Activated CD4-positive, alpha-beta T cell treated with anti-CD3 and anti-CD28 coated beads for 36 hours (primary cell): ENCODE measurements at regions of chr3 and their contacts with region 1.

Region 1: GRCh38 chr3:111668912-111669488 is 73.9 kb upstream of the ZBED2 start:
- DNase-seq: no peak
- ATAC-seq: peak; percentile 39
- H3K4me3 Mint-ChIP-seq: peak overlapping the region; percentile 26
- H3K27ac Mint-ChIP-seq: peak overlapping the region; percentile 75
- H3K4me1 Mint-ChIP-seq: peaks cover 79% of the 10 kb centered on the region
- H3K27me3 Mint-ChIP-seq: no peaks in the 10 kb centered on the region

Region 2: DNA sequence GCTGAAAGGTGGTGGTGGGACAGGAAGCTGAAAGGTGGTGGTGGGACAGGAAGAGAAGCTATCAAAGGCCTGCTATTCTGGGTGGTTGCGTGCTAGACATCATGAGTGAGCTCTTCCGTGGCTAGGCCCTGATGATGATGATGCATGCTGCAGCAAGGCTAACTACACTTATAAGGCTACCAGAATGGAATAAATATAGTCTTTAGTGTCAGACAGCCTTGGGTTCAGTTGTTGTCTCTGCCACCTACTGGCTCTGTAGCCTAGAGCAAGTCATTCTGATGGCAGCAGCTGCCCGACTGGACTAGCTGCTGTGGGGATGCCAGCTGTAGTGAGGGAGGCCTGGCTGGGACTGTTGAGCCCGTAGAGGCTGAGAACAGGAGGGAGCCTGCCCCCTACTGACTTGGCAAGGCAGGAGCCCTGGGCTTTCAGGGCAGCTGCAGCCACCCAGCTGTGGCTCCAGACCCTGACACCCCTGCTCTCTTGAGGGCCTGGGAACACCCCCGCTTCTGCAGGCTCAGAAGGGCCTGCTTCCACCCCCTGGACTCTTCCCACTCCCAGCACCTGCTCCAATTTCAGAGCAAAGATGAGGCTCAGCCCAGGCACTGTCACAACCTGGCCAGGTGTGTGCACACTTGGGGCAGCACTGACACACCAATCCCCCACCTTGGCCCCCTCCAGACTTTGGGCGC is 52.4 kb before region 1 on chr3:
- CTCF ChIA-PET with region 1: interaction called, 6 read pairs
- POLR2A ChIA-PET with region 1: interaction called, 3 read pairs
- intact Hi-C with region 1: loop called (anchors 1 to 2 kb)
- DNase-seq: peak; percentile 84
- ATAC-seq: peak; percentile 84
- H3K4me3 Mint-ChIP-seq: no peak overlapping the region
- H3K27ac Mint-ChIP-seq: peak overlapping the region; percentile 92
- H3K4me1 Mint-ChIP-seq: peaks cover 77% of the 10 kb centered on the region
- H3K27me3 Mint-ChIP-seq: no peaks in the 10 kb centered on the region

Region 3: DNA sequence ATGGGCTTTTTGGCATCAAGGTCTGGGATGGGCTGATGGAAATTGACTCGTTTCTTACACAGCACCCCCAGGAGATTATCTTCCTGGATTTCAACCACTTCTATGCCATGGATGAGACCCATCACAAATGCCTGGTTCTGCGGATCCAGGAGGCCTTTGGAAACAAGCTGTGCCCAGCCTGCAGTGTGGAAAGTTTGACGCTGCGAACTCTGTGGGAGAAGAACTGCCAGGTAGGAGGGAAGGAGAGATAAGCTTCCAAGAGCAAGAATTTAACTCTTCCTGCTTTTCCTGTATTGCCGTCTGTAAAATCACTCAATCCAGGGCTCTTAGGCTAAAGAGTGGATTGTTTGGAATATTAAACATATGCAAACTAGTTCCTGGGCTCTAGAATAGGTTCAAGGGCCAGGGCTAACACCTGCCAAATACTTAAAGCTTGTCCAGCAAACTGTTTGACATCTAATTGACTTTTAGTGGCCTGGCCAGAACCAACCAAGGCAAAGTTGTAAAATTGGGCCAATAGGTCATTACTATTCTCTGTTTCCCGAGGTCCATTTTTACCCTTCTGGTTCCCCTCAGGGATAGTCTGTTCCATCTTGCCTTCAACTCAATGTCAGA is 39.3 kb after region 1 on chr3:
- CTCF ChIA-PET with region 1: interaction called, 13 read pairs
- POLR2A ChIA-PET with region 1: no interaction called
- intact Hi-C with region 1: no loop called
- DNase-seq: no peak
- ATAC-seq: no peak
- H3K4me3 Mint-ChIP-seq: no peak overlapping the region
- H3K27ac Mint-ChIP-seq: no peak overlapping the region
- H3K4me1 Mint-ChIP-seq: peaks cover 33% of the 10 kb centered on the region
- H3K27me3 Mint-ChIP-seq: no peaks in the 10 kb centered on the region

Region 4: GRCh38 chr3:111859974-111860859 is 191.2 kb after region 1 on chr3:
- CTCF ChIA-PET with region 1: interaction called, 8 read pairs
- POLR2A ChIA-PET with region 1: no interaction called
- intact Hi-C with region 1: loop called in 1 of 2 experiments (anchors 2 kb)
- DNase-seq: peak; percentile 66
- ATAC-seq: peak; percentile 66
- H3K4me3 Mint-ChIP-seq: peak overlapping the region; percentile 82
- H3K27ac Mint-ChIP-seq: peak overlapping the region; percentile 29
- H3K4me1 Mint-ChIP-seq: peaks cover 11% of the 10 kb centered on the region
- H3K27me3 Mint-ChIP-seq: peaks cover 36% of the 10 kb centered on the region

Region 5: GRCh38 chr3:112013058-112013783 is 344.2 kb after region 1 on chr3:
- CTCF ChIA-PET with region 1: interaction called, 27 read pairs
- POLR2A ChIA-PET with region 1: no interaction called
- intact Hi-C with region 1: loop called (anchors 1 kb)
- DNase-seq: peak; percentile 82
- ATAC-seq: peak; percentile 96
- H3K4me3 Mint-ChIP-seq: no peak overlapping the region
- H3K27ac Mint-ChIP-seq: peak overlapping the region; percentile 29
- H3K4me1 Mint-ChIP-seq: peaks cover 20% of the 10 kb centered on the region
- H3K27me3 Mint-ChIP-seq: no peaks in the 10 kb centered on the region